Sciatic nerve (tissue), 2 donors: ENCODE measurements at regions of chr18 and their contacts with region 1.

Region 1: GRCh38 chr18:3593904-3594661 is 144.1 kb downstream of the TGIF1 start:
- DNase-seq: peak; percentile 94
- ATAC-seq: peak; percentile 92

Region 2: GRCh38 chr18:3029215-3029952 is 564.7 kb before region 1 on chr18:
- intact Hi-C with region 1: no loop called
- DNase-seq: no peak
- ATAC-seq: peak; percentile 36

Region 3: GRCh38 chr18:3447895-3448837 is 145.9 kb before region 1 on chr18:
- intact Hi-C with region 1: loop called (anchors 5 kb)
- DNase-seq: peak; percentile 96
- ATAC-seq: peak; percentile 86

Region 4: DNA sequence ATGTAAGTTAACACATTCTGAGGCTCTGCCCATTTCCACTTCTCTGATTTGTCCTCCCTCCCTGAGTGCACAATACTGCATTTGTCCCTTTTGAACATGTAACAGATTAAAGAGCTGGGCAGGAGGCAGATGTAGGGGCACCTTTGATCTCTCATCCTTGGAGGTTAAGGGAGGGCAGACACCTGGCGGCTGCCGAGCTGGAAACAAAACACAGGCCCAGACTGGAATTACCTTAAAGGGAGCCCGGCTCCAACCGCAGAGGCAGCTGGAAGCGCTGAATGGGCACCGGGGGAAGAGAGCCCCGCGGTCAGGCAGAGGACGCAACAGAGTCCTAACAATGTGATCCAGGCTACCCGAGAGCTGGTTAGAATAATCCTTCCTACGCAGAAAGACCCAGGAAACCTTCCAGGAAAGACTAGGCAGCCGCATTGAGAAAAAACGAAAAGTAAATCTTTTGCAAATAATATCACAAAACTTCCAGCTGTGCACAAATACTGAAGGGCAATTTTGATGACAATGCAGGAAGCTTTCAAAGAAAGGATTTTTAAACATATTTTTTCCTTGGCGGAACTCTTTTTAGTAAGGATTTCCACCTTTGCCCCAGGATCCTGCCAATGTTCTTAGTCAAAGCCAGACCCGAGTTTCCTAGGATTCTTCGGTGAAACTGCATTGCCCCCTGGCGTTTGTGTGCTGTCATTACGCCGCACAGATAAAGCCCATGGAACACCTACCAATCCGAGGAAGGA is 71.9 kb after region 1 on chr18:
- intact Hi-C with region 1: loop called (anchors 10 kb)
- DNase-seq: peak; percentile 90
- ATAC-seq: peak; percentile 94